Activated naive CD4-positive, alpha-beta T cell treated with anti-CD3 and anti-CD28 coated beads for 36 hours (primary cell): ENCODE measurements at regions of chr11 and their contacts with region 1.

Region 1: DNA sequence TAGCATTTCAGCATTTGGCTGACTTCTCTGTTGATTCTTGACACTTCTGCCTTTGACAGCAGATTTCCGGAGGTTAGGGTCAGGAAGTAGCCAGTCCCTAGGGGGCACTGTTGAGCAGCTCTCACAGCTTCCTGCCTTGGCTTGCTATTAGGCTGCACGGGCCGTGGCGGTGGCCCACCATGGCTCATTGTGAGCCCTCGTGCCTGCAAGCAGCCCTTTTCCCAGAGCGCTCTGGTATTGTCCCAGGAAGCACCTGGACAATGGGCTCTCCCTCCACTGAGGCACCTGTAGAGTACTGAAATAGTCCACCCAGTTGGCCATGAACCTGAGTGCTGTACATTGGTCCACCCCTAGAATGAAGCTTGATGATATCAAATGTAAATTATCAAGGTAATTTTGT is 100.2 kb upstream of the GAL start:
- DNase-seq: peak; percentile 75
- H3K4me3 Mint-ChIP-seq: no peak overlapping the region
- H3K27ac Mint-ChIP-seq: no peak overlapping the region
- H3K4me1 Mint-ChIP-seq: peaks cover 8% of the 10 kb centered on the region
- H3K27me3 Mint-ChIP-seq: no peaks in the 10 kb centered on the region

Region 2: DNA sequence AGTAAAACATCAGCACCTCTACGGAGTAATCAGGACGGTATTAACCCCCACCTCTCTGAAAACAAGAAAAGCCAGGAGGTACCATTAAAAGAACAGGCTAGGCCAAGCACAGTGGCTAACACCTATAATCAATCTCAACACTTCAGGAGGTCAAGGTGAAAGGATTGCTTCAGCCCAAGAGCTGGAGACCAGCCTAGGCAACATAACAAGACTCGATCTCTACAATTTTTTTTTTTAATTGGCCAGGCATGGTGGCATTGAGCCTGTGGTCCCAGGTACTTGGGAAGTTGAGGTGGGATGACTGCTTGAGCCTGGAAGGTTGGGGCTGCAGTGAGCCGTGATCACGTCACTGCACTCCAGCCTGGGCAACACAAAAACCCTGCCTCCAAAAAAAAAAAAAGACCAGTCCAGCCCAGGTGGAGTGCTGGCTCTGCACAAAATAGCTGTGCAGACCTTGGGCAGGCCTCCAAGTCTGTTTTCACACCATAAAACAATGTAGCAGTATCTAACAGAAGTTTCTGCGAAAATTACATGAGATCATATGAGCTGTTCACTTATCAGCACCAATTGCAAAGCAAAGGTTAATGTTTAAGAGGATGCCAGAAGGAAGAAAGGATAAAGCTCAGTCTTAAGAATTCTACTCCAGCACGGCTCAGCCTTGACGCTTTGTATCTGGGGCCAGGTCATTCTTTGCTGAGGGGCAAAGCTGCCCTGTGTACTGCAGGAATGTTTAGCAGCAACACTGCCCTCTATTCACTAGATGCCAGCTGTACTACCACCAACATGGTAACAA is 477.7 kb before region 1 on chr11:
- CTCF ChIA-PET with region 1: no interaction called
- intact Hi-C with region 1: no loop called
- DNase-seq: no peak
- H3K4me3 Mint-ChIP-seq: no peak overlapping the region
- H3K27ac Mint-ChIP-seq: no peak overlapping the region
- H3K4me1 Mint-ChIP-seq: no peaks in the 10 kb centered on the region
- H3K27me3 Mint-ChIP-seq: no peaks in the 10 kb centered on the region

Region 3: GRCh38 chr11:68570691-68571090 is 13.4 kb before region 1 on chr11:
- CTCF ChIA-PET with region 1: interaction called, 14 read pairs
- intact Hi-C with region 1: no loop called
- DNase-seq: no peak
- H3K4me3 Mint-ChIP-seq: no peak overlapping the region
- H3K27ac Mint-ChIP-seq: no peak overlapping the region
- H3K4me1 Mint-ChIP-seq: peaks cover 30% of the 10 kb centered on the region
- H3K27me3 Mint-ChIP-seq: no peaks in the 10 kb centered on the region

Region 4: DNA sequence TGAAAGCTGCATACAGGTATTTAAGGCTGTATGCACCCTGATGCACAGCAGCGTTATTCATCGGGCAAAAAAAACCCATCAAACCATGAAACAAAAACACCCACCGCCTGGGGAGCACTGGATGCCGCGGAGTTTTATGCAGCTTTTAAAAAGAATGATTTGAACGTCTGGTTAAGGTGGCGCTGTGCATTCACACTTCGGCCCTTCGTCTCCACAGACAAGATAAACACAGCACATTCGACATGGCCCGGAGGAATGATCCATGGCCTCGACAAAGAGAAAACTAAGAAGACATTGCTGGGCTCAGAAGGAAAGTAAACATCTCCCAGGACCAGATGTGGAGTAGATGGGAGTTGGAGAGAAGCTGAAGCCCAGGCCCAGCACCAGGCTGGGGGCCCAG is 59.5 kb after region 1 on chr11:
- CTCF ChIA-PET with region 1: no interaction called
- intact Hi-C with region 1: no loop called
- DNase-seq: no peak
- H3K4me3 Mint-ChIP-seq: no peak overlapping the region
- H3K27ac Mint-ChIP-seq: no peak overlapping the region
- H3K4me1 Mint-ChIP-seq: no peaks in the 10 kb centered on the region
- H3K27me3 Mint-ChIP-seq: peaks cover 9% of the 10 kb centered on the region